B cell (primary cell): ENCODE measurements at regions of chr13 and their contacts with region 1.

Region 1: GRCh38 chr13:30371649-30372265 is 50.5 kb upstream of the UBE2L5 start:
- DNase-seq: peak; percentile 98
- ATAC-seq: peak; percentile 83
- H3K4me3 ChIP-seq: peak overlapping the region; percentile 13 to 47 (median 45)
- H3K4me3 Mint-ChIP-seq: peak overlapping the region; percentile 91
- H3K27ac ChIP-seq: peak overlapping the region; percentile 76 to 78
- H3K27ac Mint-ChIP-seq: peak overlapping the region; percentile 94
- H3K4me1 ChIP-seq: peaks cover 75 to 81% of the 10 kb centered on the region in 2 donors
- H3K4me1 Mint-ChIP-seq: peaks cover 84% of the 10 kb centered on the region
- H3K27me3 ChIP-seq: no peaks in the 10 kb centered on the region
- H3K27me3 Mint-ChIP-seq: no peaks in the 10 kb centered on the region
- CTCF ChIP-seq: no peak

Region 2: GRCh38 chr13:30306762-30307193 is 65.0 kb before region 1 on chr13:
- CTCF ChIA-PET with region 1: interaction called, 3 read pairs
- POLR2A ChIA-PET with region 1: interaction called, 4 read pairs
- intact Hi-C with region 1: loop called (anchors 1 kb)
- DNase-seq: peak; percentile 96
- ATAC-seq: peak; percentile 89
- H3K4me3 ChIP-seq: peak overlapping the region; percentile 70 to 97 (median 83)
- H3K4me3 Mint-ChIP-seq: peak overlapping the region; percentile 85
- H3K27ac ChIP-seq: peak overlapping the region; percentile 71 to 87
- H3K27ac Mint-ChIP-seq: peak overlapping the region; percentile 86
- H3K4me1 ChIP-seq: peaks cover 28 to 45% of the 10 kb centered on the region in 2 donors
- H3K4me1 Mint-ChIP-seq: peaks cover 55% of the 10 kb centered on the region
- H3K27me3 ChIP-seq: no peaks in the 10 kb centered on the region
- H3K27me3 Mint-ChIP-seq: no peaks in the 10 kb centered on the region
- CTCF ChIP-seq: no peak

Region 3: DNA sequence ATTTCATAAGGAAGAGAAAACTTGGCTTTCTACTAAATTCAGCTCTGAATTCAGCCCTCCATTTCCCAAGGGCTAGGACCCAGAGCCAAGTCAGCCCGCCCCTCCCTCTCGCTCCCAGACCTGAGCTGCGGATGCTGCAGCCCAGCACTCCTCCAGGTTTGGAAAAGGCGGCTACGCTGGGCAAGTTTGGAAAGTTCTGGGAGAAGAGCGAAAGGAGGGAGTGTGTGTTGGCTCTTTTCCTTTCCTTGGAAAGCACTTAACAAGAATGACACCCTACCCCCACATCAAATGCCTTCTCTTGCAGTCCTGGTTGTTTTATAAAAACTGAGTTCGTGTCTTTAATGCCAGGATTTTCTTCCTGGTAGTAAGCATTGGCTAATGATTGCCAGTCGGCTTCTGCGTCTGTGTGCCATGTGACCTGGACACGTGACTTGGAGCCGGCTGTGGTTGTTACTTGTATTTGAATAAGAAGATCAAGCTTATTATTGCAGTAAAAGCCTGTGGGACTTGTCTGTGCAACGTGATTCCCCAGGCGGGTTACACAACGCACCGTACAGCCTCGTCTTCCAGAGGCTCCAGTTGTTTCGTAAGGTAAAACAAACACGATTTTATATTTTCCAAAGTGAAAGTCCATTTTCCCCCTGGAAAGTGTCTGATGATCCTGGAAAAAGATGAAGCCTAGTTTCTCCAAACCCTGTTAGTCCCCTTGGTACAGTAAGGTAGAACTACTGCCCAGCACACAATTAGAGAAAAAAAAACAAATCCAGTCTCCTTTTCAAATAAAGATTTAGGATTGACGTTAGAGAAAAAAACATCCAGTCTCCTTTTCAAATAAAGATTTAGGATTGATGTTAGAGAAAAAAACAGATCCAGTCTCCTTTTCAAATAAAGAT is 23.7 kb after region 1 on chr13:
- CTCF ChIA-PET with region 1: interaction called, 70 read pairs
- POLR2A ChIA-PET with region 1: interaction called, 36 read pairs
- intact Hi-C with region 1: loop called (anchors 1 kb)
- DNase-seq: peak; percentile 86
- ATAC-seq: peak; percentile 79
- H3K4me3 ChIP-seq: peak overlapping the region; percentile 62 to 96 (median 77)
- H3K4me3 Mint-ChIP-seq: peak overlapping the region; percentile 98
- H3K27ac ChIP-seq: peak overlapping the region; percentile 92
- H3K27ac Mint-ChIP-seq: peak overlapping the region; percentile 99
- H3K4me1 ChIP-seq: peaks cover 10 to 15% of the 10 kb centered on the region in 2 donors
- H3K4me1 Mint-ChIP-seq: peaks cover 24% of the 10 kb centered on the region
- H3K27me3 ChIP-seq: no peaks in the 10 kb centered on the region
- H3K27me3 Mint-ChIP-seq: no peaks in the 10 kb centered on the region
- CTCF ChIP-seq: no peak

Region 4: DNA sequence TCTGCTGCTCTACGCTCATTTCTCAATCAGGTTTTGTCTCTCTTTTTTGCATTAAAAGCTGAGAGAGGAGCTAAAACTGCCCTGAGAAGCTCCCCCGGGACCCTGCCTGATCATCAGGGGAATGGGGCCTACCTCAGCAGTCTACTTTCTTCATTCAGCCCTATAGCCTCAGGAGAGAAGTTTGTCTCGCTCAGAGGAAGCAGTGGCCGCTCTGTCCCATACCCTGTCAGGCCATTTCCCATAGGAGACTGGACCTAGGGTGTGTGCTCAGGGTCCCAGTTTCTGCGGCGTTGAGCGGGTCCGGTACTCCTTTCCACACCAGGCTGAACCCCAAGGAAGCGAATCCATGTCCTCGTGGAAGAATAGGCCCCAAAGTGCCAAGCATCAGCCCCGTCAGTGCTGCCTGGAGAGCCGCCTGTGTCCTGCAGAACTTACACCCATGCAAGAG is 72.2 kb after region 1 on chr13:
- CTCF ChIA-PET with region 1: interaction called, 48 read pairs
- POLR2A ChIA-PET with region 1: interaction called, 10 read pairs
- intact Hi-C with region 1: loop called (anchors 1 kb)
- DNase-seq: peak; percentile 83
- ATAC-seq: peak; percentile 87
- H3K4me3 ChIP-seq: peak overlapping the region in 4 of 5 experiments; percentile 4 to 44 (median 30)
- H3K4me3 Mint-ChIP-seq: peak overlapping the region; percentile 89
- H3K27ac ChIP-seq: peak overlapping the region; percentile 82 to 88
- H3K27ac Mint-ChIP-seq: peak overlapping the region; percentile 89
- H3K4me1 ChIP-seq: peaks cover 61 to 65% of the 10 kb centered on the region in 2 donors
- H3K4me1 Mint-ChIP-seq: peaks cover 64% of the 10 kb centered on the region
- H3K27me3 ChIP-seq: no peaks in the 10 kb centered on the region
- H3K27me3 Mint-ChIP-seq: no peaks in the 10 kb centered on the region
- CTCF ChIP-seq: no peak

Region 5: DNA sequence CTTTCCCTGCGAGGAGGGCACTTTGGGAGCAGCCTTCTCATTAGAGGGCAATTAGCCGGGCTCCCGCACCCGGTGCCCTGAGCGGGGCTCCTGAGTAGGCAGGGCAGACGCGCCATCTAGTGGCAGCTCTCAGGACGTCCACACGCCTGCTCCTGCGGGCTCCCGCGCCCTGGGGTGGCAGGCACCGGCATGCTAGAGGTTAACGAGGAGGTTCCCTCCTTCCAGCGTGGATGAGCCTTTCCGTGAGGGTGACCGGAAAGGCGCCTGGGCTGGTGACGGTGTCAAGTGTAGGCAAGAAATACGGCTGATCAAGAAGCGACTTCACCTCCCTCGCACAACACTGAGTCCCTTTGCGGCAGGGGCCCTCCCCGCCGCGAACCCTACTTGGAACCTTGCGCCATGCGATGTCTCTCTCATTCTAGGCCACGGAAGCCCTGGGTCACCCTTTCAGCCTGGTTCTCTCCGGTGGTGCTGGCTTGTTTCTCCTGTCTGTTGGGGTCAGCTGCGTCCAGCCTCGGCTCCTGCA is 431.3 kb after region 1 on chr13:
- CTCF ChIA-PET with region 1: no interaction called
- POLR2A ChIA-PET with region 1: no interaction called
- intact Hi-C with region 1: no loop called
- DNase-seq: peak; percentile 87
- ATAC-seq: peak; percentile 99
- H3K4me3 ChIP-seq: peak overlapping the region in 3 of 5 experiments; percentile 18 to 37 (median 21)
- H3K4me3 Mint-ChIP-seq: peak overlapping the region; percentile 80
- H3K27ac ChIP-seq: no peak overlapping the region
- H3K27ac Mint-ChIP-seq: no peak overlapping the region
- H3K4me1 ChIP-seq: peaks cover 8 to 9% of the 10 kb centered on the region in 2 donors
- H3K4me1 Mint-ChIP-seq: peaks cover 11% of the 10 kb centered on the region
- H3K27me3 ChIP-seq: peaks cover 0 to 8% (median 0%) of the 10 kb centered on the region in 4 experiments
- H3K27me3 Mint-ChIP-seq: no peaks in the 10 kb centered on the region
- CTCF ChIP-seq: peak; percentile 98